AG04449 (cell line): ENCODE measurements at regions of chr1 and their contacts with region 1.

Region 1: GRCh38 chr1:20633190-20634064 is at the start of gene PINK1:
- DNase-seq: no peak
- H3K4me3 ChIP-seq: peak within 1 kb of the TSS; percentile 79
- CTCF ChIP-seq: peak; percentile 94

Region 2: GRCh38 chr1:20400341-20401177 is 232.9 kb before region 1 on chr1:
- CTCF ChIA-PET with region 1: no interaction called
- POLR2A ChIA-PET with region 1: no interaction called
- DNase-seq: no peak
- H3K4me3 ChIP-seq: no peak overlapping the region
- CTCF ChIP-seq: no peak

Region 3: DNA sequence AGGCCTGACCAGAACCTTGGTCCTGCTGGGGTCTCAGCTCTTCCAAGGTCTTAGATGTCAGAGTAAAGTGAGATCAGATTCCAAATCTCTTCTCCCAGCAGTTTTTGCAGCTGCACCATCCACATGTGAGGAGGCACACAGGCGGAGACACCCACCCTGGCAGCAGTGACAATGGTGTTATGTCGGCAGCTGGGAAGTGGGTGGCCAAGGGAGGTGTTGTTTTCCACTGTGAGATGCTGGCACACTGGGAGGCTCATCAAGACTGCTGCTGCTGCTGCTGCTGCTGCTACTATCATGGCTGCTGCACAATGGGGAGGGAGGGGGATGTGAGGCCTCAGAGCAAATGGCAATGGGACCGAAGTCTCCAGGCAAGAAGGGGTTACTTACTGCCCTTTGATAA is 171.0 kb before region 1 on chr1:
- CTCF ChIA-PET with region 1: no interaction called
- POLR2A ChIA-PET with region 1: no interaction called
- DNase-seq: no peak
- H3K4me3 ChIP-seq: no peak overlapping the region
- CTCF ChIP-seq: no peak

Region 4: GRCh38 chr1:20521960-20522861 is 111.2 kb before region 1 on chr1:
- CTCF ChIA-PET with region 1: interaction called, 323 read pairs
- POLR2A ChIA-PET with region 1: interaction called, 3 read pairs
- DNase-seq: peak; percentile 10
- H3K4me3 ChIP-seq: 0 out of 2 replicates have a peak overlapping the region, but pooled peaks have one; percentile 18
- CTCF ChIP-seq: peak; percentile 76

Region 5: DNA sequence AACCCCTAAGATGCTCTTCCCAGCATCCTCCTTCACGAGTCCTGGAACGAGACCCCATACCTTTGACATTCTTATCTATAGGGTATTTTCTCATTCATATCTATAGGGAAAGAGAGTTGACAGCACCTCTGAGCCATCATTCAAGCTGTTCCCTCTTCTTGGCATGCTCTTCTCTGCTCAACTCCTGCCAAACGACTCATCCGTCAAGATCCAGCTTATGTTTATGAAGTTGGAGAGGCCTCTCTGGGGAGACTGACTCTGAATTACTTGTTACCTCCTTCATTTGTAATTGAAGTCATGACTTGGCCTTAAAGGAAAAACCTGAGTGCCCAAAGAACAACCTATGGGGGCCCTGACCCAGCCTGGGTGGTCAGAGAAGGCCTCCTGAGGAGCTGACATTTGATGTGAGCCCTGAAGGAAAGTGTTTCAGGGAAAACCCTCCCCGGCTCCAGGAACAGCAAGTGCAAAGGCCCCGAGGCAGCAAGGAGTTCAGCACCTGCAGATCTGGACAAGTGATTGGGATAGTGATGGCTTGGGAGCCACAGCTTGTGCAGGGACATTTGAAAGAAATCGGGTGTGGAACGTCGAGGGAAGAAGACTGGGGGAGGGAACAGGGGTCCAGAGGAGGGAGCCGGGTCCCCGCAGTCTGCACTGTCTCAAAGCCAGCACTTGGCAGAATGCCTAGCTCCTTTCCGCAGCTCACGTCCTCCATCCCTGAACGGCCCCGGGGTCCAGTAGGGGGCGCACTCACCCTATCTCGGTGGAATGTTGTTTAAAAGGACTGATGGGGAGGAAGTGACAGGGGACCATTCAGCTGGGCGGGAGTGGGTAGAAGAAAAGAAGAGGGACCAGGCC is 58.5 kb before region 1 on chr1:
- CTCF ChIA-PET with region 1: interaction called, 186 read pairs
- POLR2A ChIA-PET with region 1: interaction called, 5 read pairs
- DNase-seq: no peak
- H3K4me3 ChIP-seq: no peak overlapping the region
- CTCF ChIP-seq: peak; percentile 90

Region 6: DNA sequence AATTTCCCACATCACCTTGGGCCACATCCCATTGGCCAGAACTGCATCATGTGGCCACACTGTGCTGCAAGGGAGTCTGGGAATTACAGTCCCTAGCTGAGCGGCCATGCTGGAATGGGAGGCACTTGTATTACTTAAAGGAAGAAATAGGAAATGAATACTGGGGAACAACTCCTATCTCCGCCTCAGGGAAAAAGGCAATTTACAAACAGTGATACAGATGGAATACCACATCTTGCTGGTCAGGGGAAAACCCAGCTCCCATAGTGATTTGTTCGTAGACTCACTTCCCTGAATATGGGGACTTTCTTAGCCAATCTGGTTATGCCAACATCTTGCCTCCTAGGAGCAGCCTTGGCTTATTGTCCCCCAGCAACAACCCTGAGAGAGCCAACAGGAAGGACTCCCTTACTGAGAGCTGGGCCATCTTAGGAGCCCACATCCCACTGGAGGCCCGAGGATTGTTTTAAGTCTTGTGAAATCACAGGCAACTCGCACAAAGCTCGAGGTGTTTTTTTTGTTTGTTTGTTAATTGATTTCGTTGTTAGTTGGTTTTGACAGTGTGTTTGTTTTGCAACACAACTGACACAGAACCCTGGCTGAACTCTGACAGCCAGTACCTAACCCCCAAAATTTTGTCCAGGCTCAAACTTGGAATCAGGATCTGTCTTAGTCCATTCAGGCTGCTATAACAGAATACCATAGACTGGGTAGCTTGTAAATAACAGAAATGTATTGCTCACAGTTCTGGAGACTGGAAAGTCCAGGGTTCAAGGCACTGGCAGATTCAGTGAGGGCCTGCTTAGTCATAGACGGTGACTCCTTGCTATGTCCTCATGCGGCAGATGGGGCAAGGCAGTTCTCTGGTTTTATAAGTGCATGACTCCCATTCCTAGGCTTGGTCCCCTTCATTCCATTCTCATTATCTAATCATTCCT is 29.6 kb before region 1 on chr1:
- CTCF ChIA-PET with region 1: interaction called, 224 read pairs
- POLR2A ChIA-PET with region 1: interaction called, 5 read pairs
- DNase-seq: peak; percentile 84
- H3K4me3 ChIP-seq: no peak overlapping the region
- CTCF ChIP-seq: no peak

Region 7: GRCh38 chr1:20648946-20649345 is 15.5 kb after region 1 on chr1:
- CTCF ChIA-PET with region 1: interaction called, 60 read pairs
- POLR2A ChIA-PET with region 1: interaction called, 3 read pairs
- DNase-seq: no peak
- H3K4me3 ChIP-seq: no peak overlapping the region
- CTCF ChIP-seq: no peak

Region 8: GRCh38 chr1:20811916-20812315 is 178.5 kb after region 1 on chr1:
- CTCF ChIA-PET with region 1: no interaction called
- POLR2A ChIA-PET with region 1: no interaction called
- DNase-seq: no peak
- H3K4me3 ChIP-seq: no peak overlapping the region
- CTCF ChIP-seq: no peak

Region 9: DNA sequence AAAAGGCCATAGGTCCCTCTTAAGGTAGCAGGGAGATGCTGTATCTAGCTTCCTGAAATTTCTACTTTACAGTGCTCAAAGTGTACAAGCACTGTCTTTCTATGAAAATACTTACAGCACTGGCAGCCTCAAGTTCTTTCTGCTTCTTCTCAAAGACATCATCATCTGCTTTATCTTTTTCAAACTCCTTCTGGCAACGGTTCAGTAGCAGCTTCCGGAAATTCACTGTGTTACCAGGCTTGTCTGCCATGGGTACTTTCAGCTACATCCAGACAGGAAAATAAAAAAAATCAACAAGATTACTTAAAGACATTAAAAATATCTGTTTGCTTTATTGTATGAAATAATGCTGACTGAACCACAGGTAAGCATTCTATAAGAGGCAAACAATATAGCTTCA is 231.6 kb after region 1 on chr1:
- CTCF ChIA-PET with region 1: no interaction called
- POLR2A ChIA-PET with region 1: no interaction called
- DNase-seq: no peak
- H3K4me3 ChIP-seq: no peak overlapping the region
- CTCF ChIP-seq: no peak